KBM-7 (cell line): ENCODE measurements at regions of chr18 and their contacts with region 1.

Region 1: GRCh38 chr18:11995445-11996189 is 14.3 kb downstream of the IMPA2 start:
- DNase-seq: peak; percentile 87

Region 2: GRCh38 chr18:11937874-11938478 is 57.6 kb before region 1 on chr18:
- in situ Hi-C with region 1: loop called (anchors 10 kb)
- DNase-seq: peak; percentile 81

Region 3: DNA sequence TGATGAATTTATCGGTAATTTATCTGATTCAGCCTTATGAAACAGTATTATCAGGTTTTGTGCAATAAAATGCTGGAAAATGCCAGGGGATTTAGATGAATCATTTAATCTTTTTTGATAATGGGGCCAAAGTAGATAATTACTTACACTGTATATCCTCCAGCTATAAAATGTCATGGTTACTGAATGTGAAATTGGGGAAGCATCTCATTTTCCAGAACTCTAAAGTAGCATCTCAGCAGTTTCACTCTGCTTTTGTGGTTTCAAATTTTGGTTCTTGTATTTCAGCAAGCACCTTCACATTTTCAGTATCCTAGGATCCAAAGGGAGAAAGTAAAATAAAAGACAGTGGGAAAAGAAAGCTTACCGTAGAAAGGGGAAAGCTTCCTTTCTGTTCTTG is 110.9 kb after region 1 on chr18:
- in situ Hi-C with region 1: no loop called
- DNase-seq: no peak

Region 4: GRCh38 chr18:12236934-12237832 is 241.6 kb after region 1 on chr18:
- in situ Hi-C with region 1: no loop called
- DNase-seq: peak; percentile 86